PC-3 (cell line): ENCODE measurements at regions of chr1 and their contacts with region 1.

Region 1: DNA sequence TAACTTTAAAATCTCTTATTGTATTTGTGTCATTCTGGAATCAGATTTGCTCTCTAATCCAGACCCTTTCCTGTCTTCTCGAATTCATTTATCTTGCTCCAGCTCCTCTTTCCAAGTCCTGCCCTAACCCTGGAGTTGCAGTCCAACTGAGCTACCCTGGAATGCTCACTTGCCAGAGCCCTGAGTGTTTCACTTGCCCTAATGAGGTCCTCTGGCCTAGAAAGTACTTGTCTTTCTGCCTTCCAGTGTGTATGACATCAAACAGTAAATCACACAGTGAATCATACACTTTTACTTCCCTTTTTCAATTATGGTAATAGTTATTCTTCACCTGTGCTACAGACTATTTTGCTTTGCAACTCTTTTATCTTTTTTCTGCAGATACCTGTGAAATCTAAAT is 96.9 kb downstream of the NEK7 start:
- DNase-seq: peak; percentile 52
- ATAC-seq: peak; percentile 75
- H3K4me3 ChIP-seq: no peak overlapping the region
- H3K27ac ChIP-seq: peak overlapping the region; percentile 21; the same call in 1 of the 2 replicates
- H3K4me1 ChIP-seq: peaks cover 24% of the 10 kb centered on the region
- H3K27me3 ChIP-seq: no peaks in the 10 kb centered on the region
- CTCF ChIP-seq: no peak

Region 2: DNA sequence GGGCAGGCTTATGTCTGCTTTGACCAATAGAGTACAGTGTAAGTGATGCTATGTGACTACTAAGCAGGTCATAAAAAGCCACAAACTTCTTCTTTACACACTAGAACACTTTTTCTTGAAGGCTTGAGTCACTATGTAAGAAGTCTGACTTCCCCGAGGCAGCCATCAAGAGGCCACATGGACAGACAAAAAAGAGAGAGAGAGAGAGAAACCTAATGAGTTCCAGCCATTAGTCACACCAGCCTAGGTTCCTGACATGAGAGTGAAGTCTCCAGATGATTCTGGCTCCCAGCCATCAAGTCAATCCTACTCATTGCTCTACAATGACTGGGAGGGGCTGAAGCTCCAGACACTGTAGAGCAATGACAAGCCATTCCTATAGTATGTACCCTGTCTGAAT is 235.1 kb before region 1 on chr1:
- CTCF ChIA-PET with region 1: no interaction called
- POLR2A ChIA-PET with region 1: no interaction called
- intact Hi-C with region 1: no loop called
- DNase-seq: peak; percentile 92
- ATAC-seq: peak; percentile 97
- H3K4me3 ChIP-seq: no peak overlapping the region
- H3K27ac ChIP-seq: peak overlapping the region; percentile 33
- H3K4me1 ChIP-seq: peaks cover 11% of the 10 kb centered on the region; the same call in 1 of the 2 replicates
- H3K27me3 ChIP-seq: no peaks in the 10 kb centered on the region
- CTCF ChIP-seq: no peak

Region 3: DNA sequence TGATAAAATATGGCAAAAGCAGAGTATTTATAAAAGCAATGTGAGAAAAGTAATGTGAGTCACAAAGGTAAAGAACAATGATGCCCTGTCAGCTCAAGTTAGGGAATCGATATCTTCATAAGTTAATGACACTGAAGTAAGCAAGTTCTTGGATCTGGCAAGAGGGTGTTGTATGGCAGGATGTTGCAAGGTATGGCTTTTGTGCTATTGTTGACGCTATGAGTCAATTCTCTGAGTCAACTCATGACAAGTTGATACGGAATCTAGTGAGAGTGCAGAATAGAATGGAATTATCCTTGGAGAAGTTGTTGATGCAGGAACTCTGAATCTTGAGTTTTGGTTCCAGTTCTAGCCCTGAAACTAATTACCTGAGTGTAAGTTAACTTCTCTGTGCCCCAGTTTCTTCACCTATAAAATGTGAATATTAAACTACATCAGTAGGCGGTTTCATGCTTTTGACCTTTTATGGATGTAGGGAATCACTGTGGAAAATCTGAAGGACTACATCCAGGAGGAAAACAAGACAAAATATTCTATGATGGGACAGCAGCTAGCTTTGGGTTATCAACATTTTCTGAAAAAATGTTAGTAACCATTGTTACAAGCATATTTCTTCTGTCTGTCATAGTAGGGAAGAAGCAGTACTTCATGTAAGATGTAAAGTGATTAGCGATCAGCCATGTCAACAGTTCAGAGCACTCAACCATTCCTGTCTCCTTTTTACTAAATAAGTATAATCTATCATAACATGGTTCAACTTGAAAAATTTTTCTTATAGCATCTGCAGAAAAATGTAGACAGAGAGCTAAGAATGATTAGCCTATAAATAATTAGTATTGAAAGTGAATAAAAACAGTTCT is 189.9 kb after region 1 on chr1:
- CTCF ChIA-PET with region 1: no interaction called
- POLR2A ChIA-PET with region 1: no interaction called
- intact Hi-C with region 1: loop called (anchors 10 kb)
- DNase-seq: peak; percentile 93
- ATAC-seq: peak; percentile 93
- H3K4me3 ChIP-seq: 0 out of 2 replicates have a peak overlapping the region, but pooled peaks have one; percentile 14
- H3K27ac ChIP-seq: peak overlapping the region; percentile 95
- H3K4me1 ChIP-seq: peaks cover 33% of the 10 kb centered on the region
- H3K27me3 ChIP-seq: no peaks in the 10 kb centered on the region
- CTCF ChIP-seq: no peak